ENCODE measurements at regions of chr3 and their contacts with region 1.

Region 1: GRCh38 chr3:149969940-149970715 is 567 bp downstream of the PFN2 start:
- DNase-seq: peak; percentile 39
- ATAC-seq: peak; percentile 82
- H3K4me3 ChIP-seq: peak overlapping the region; percentile 66
- H3K27ac ChIP-seq: peak overlapping the region; percentile 15; the same call in 1 of the 2 replicates
- H3K4me1 ChIP-seq: no peaks in the 10 kb centered on the region
- H3K27me3 ChIP-seq: 0 out of 4 replicates have a peak, but pooled peaks cover 0 to 4% of the 10 kb centered on the region in 2 experiments
- CTCF ChIP-seq: no peak
- EP300 ChIP-seq: no peak
- POLR2A ChIP-seq: no peak
- RAD21 ChIP-seq: no peak

Region 2: GRCh38 chr3:149936812-149937233 is 33.3 kb before region 1 on chr3:
- CTCF ChIA-PET with region 1: interaction called, 41 read pairs
- POLR2A ChIA-PET with region 1: no interaction called
- RAD21 ChIA-PET with region 1: interaction called, 12 read pairs
- SMC1A ChIA-PET with region 1: interaction called, 18 read pairs
- in situ Hi-C with region 1: no loop called
- intact Hi-C with region 1: loop called (anchors 1 kb)
- DNase-seq: peak; percentile 37
- ATAC-seq: peak; percentile 93
- H3K4me3 ChIP-seq: no peak overlapping the region
- H3K27ac ChIP-seq: no peak overlapping the region
- H3K4me1 ChIP-seq: no peaks in the 10 kb centered on the region
- H3K27me3 ChIP-seq: no peaks in the 10 kb centered on the region
- CTCF ChIP-seq: peak; percentile 79 to 87 (median 82)
- EP300 ChIP-seq: no peak
- POLR2A ChIP-seq: no peak
- RAD21 ChIP-seq: peak; percentile 80

Region 3: GRCh38 chr3:150022381-150023238 is 52.5 kb after region 1 on chr3:
- CTCF ChIA-PET with region 1: interaction called, 5 read pairs
- POLR2A ChIA-PET with region 1: no interaction called
- RAD21 ChIA-PET with region 1: interaction called, 3 read pairs
- SMC1A ChIA-PET with region 1: interaction called, 3 read pairs
- in situ Hi-C with region 1: no loop called
- intact Hi-C with region 1: loop called (anchors 2 kb)
- DNase-seq: peak; percentile 23
- ATAC-seq: peak; percentile 74
- H3K4me3 ChIP-seq: no peak overlapping the region
- H3K27ac ChIP-seq: no peak overlapping the region
- H3K4me1 ChIP-seq: peaks cover 4% of the 10 kb centered on the region; the same call in 1 of the 2 replicates
- H3K27me3 ChIP-seq: no peaks in the 10 kb centered on the region
- CTCF ChIP-seq: no peak
- EP300 ChIP-seq: no peak
- POLR2A ChIP-seq: no peak
- RAD21 ChIP-seq: no peak

Region 4: DNA sequence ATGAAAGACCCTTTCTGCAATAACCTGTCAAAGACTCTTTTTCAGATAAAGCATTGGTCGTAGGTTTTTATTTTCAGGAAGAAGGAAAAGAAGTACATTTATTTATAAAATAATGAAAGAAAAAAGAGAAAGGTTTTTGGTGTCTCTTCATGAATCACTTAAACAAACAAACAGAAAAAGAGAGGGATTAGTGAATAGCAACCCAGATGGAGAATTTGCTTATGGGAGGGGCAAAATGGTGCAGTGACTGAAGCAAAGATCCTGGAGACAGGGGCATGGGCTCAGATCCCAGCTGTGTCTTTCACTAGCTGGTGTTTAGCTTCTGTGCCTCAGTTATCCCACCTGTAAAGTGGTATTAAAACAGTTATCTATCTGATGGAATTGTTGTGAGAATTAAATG is 79.2 kb after region 1 on chr3:
- CTCF ChIA-PET with region 1: no interaction called
- POLR2A ChIA-PET with region 1: no interaction called
- RAD21 ChIA-PET with region 1: no interaction called
- SMC1A ChIA-PET with region 1: no interaction called
- in situ Hi-C with region 1: no loop called
- intact Hi-C with region 1: no loop called
- DNase-seq: no peak
- ATAC-seq: no peak
- H3K4me3 ChIP-seq: no peak overlapping the region
- H3K27ac ChIP-seq: no peak overlapping the region
- H3K4me1 ChIP-seq: no peaks in the 10 kb centered on the region
- H3K27me3 ChIP-seq: peaks cover 0 to 3% of the 10 kb centered on the region in 2 experiments; a peak in 2 of 4 replicates
- CTCF ChIP-seq: no peak
- EP300 ChIP-seq: no peak
- POLR2A ChIP-seq: no peak
- RAD21 ChIP-seq: no peak

Region 5: DNA sequence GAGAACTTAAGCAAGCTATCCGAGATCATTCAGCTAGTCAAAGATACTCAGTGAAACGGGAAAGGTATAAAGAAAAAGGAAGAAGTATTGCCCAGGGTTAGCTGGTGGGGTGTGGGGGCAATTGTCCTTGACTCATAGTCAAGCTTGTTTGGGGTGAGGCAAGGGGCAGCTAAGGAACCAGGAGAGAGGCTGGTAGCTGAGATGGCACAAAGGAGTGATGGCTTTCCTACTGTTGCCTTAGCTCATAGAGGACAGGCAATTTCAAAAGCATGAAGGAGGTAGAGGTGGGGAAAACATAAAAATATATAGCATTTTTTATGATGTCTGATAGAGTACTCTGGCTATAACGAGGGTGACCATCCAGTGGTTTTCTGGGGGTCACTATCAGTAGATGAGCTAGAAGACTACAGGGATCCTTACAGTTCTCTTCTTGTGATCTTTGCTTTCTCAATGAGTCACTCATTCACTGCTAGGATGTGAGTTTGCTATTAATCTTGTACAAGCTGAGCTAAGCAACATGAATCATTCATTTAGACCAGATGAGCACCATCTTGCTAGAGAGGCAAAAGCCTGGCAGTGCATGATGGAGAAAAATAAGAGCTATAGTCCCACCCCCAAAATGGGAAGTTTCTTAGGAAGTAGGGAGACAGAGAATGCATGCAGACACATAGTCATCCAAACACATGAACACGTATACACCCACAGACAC is 207.7 kb after region 1 on chr3:
- CTCF ChIA-PET with region 1: interaction called, 128 read pairs
- POLR2A ChIA-PET with region 1: interaction called, 3 read pairs
- RAD21 ChIA-PET with region 1: interaction called, 111 read pairs
- SMC1A ChIA-PET with region 1: interaction called, 90 read pairs
- in situ Hi-C with region 1: loop called (anchors 5 kb)
- intact Hi-C with region 1: no loop called
- DNase-seq: no peak
- ATAC-seq: no peak
- H3K4me3 ChIP-seq: no peak overlapping the region
- H3K27ac ChIP-seq: no peak overlapping the region
- H3K4me1 ChIP-seq: no peaks in the 10 kb centered on the region
- H3K27me3 ChIP-seq: no peaks in the 10 kb centered on the region
- CTCF ChIP-seq: no peak
- EP300 ChIP-seq: no peak
- POLR2A ChIP-seq: no peak
- RAD21 ChIP-seq: no peak

Region 6: DNA sequence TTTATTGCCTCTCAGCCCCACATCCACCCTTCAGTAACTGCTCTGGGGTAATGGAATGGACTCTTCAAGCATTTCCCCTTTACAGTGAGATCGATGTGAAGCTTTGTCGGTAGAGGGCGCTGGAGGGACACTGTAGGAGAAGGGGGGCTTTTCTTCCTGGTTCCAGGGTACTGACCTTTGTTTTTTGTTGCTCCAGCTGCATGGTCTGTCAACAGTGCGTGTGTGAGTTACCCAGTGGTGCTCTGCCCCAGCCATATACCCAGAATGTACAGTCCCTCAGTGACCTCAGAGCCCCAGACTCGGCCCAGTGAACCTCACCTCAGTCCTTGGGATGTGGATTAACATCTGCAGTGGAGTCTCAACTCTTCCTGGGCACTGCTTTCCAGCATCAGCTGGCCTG is 257.7 kb after region 1 on chr3:
- CTCF ChIA-PET with region 1: interaction called, 11 read pairs
- POLR2A ChIA-PET with region 1: no interaction called
- RAD21 ChIA-PET with region 1: interaction called, 8 read pairs
- SMC1A ChIA-PET with region 1: interaction called, 9 read pairs
- in situ Hi-C with region 1: no loop called
- intact Hi-C with region 1: no loop called
- DNase-seq: no peak
- ATAC-seq: peak; percentile 94
- H3K4me3 ChIP-seq: no peak overlapping the region
- H3K27ac ChIP-seq: no peak overlapping the region
- H3K4me1 ChIP-seq: no peaks in the 10 kb centered on the region
- H3K27me3 ChIP-seq: 0 out of 4 replicates have a peak, but pooled peaks cover 0 to 3% of the 10 kb centered on the region in 2 experiments
- CTCF ChIP-seq: peak; percentile 71 to 81 (median 80)
- EP300 ChIP-seq: no peak
- POLR2A ChIP-seq: no peak
- RAD21 ChIP-seq: peak; percentile 87

Measured in GM12878 (cell line).